ENCODE measurements at regions of chr3 and their contacts with region 1.

Region 1: GRCh38 chr3:98755601-98756000 is 7.5 kb upstream of the ST3GAL6 start:
- DNase-seq: no peak
- ATAC-seq: no peak
- H3K4me3 ChIP-seq: no peak overlapping the region
- H3K27ac ChIP-seq: no peak overlapping the region
- H3K4me1 ChIP-seq: no peaks in the 10 kb centered on the region; the same call in 1 of the 2 replicates
- H3K27me3 ChIP-seq: no peaks in the 10 kb centered on the region
- CTCF ChIP-seq: no peak
- EP300 ChIP-seq: no peak
- POLR2A ChIP-seq: no peak
- RAD21 ChIP-seq: no peak

Region 2: GRCh38 chr3:98522244-98523090 is 233.1 kb before region 1 on chr3 and contains the start of gene CLDND1:
- CTCF ChIA-PET with region 1: no interaction called
- POLR2A ChIA-PET with region 1: no interaction called
- RAD21 ChIA-PET with region 1: no interaction called
- SMC1A ChIA-PET with region 1: no interaction called
- in situ Hi-C with region 1: no loop called
- intact Hi-C with region 1: no loop called
- DNase-seq: peak; percentile 88
- ATAC-seq: peak; percentile 86
- H3K4me3 ChIP-seq: peak within 1 kb of the TSS; percentile 82
- H3K27ac ChIP-seq: peak within 1 kb of the TSS; percentile 85
- H3K4me1 ChIP-seq: peaks cover 13% of the 10 kb centered on the region; the same call in 1 of the 2 replicates
- H3K27me3 ChIP-seq: no peaks in the 10 kb centered on the region
- CTCF ChIP-seq: no peak
- EP300 ChIP-seq: no peak
- POLR2A ChIP-seq: peak; percentile 94
- RAD21 ChIP-seq: no peak
- polyA plus RNA-seq, gene CLDND1: 150 to 163 TPM

Region 3: GRCh38 chr3:98705706-98706105 is 49.9 kb before region 1 on chr3:
- CTCF ChIA-PET with region 1: no interaction called
- POLR2A ChIA-PET with region 1: no interaction called
- RAD21 ChIA-PET with region 1: no interaction called
- SMC1A ChIA-PET with region 1: no interaction called
- in situ Hi-C with region 1: no loop called
- intact Hi-C with region 1: no loop called
- DNase-seq: no peak
- ATAC-seq: peak; percentile 57; the same call in 2 of the 3 replicates
- H3K4me3 ChIP-seq: no peak overlapping the region
- H3K27ac ChIP-seq: no peak overlapping the region
- H3K4me1 ChIP-seq: no peaks in the 10 kb centered on the region
- H3K27me3 ChIP-seq: no peaks in the 10 kb centered on the region
- CTCF ChIP-seq: peak; percentile 19 to 32 (median 22); a peak in 4 of 6 replicates
- EP300 ChIP-seq: no peak
- POLR2A ChIP-seq: no peak
- RAD21 ChIP-seq: peak; percentile 57

Region 4: DNA sequence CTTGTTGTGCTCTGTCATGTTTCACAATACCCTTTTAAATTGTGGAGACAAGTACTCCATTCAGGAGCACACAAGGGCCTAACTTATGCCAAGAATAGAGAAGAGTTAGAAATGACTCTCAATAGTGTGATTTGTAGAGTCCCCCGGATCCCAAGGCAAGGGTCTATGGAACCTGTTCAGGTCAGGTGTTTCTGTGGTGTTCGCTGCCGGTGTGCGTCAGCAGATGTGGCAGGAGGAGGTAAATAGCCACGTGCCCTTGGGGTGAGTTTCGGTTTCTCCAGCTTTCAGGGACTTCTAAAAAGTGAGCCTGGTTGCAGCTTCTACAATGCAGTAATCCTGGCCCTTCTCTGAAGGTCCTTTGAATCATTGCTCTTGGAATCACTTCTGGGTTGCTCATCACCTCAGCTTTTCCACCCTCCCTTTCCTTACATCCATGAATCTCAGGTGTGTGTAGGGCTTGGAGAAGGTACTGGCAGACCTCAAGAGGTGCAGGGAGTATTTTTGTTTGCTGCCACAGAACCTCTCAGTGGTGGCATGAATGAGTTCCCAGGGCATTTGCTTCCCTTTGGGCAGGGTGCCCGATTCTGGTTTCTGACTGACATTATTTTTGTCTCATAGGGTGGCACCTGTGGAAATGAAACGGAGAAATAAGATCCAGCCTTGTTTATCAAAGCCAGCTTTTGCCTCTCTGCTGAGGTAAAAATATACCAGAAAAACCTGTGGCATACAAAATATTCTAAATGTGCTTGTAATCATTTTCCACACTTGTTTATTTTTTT is 14.8 kb after region 1 on chr3:
- CTCF ChIA-PET with region 1: interaction called, 5 read pairs
- POLR2A ChIA-PET with region 1: interaction called, 7 read pairs
- RAD21 ChIA-PET with region 1: interaction called, 16 read pairs
- SMC1A ChIA-PET with region 1: interaction called, 34 read pairs
- in situ Hi-C with region 1: no loop called
- intact Hi-C with region 1: no loop called
- DNase-seq: peak; percentile 53
- ATAC-seq: peak; percentile 95
- H3K4me3 ChIP-seq: 0 out of 2 replicates have a peak overlapping the region, but pooled peaks have one; percentile 5
- H3K27ac ChIP-seq: peak overlapping the region; percentile 62
- H3K4me1 ChIP-seq: peaks cover 10% of the 10 kb centered on the region
- H3K27me3 ChIP-seq: no peaks in the 10 kb centered on the region
- CTCF ChIP-seq: no peak
- EP300 ChIP-seq: peak; percentile 68 to 79; a peak in 3 of 4 replicates
- POLR2A ChIP-seq: no peak
- RAD21 ChIP-seq: no peak

Region 5: GRCh38 chr3:98778852-98779413 is 23.3 kb after region 1 on chr3:
- CTCF ChIA-PET with region 1: interaction called, 3 read pairs
- POLR2A ChIA-PET with region 1: interaction called, 3 read pairs
- RAD21 ChIA-PET with region 1: no interaction called
- SMC1A ChIA-PET with region 1: interaction called, 13 read pairs
- in situ Hi-C with region 1: no loop called
- intact Hi-C with region 1: no loop called
- DNase-seq: no peak
- ATAC-seq: peak; percentile 19; the same call in 2 of the 3 replicates
- H3K4me3 ChIP-seq: no peak overlapping the region
- H3K27ac ChIP-seq: no peak overlapping the region
- H3K4me1 ChIP-seq: peaks cover 4% of the 10 kb centered on the region
- H3K27me3 ChIP-seq: no peaks in the 10 kb centered on the region
- CTCF ChIP-seq: no peak
- EP300 ChIP-seq: no peak
- POLR2A ChIP-seq: no peak
- RAD21 ChIP-seq: no peak